ENCODE measurements at regions of chr19 and their contacts with region 1.

Region 1: GRCh38 chr19:49148784-49149651 is 6.2 kb downstream of the HRC start:
- DNase-seq: peak; percentile 39 to 83 (median 59)
- ATAC-seq: peak; percentile 75
- H3K4me3 ChIP-seq: peak overlapping the region; percentile 52
- H3K4me3 Mint-ChIP-seq: peak overlapping the region; percentile 32 to 88 (median 76)
- H3K27ac ChIP-seq: no peak overlapping the region
- H3K27ac Mint-ChIP-seq: no peak overlapping the region
- H3K4me1 ChIP-seq: peaks cover 8 to 35% of the 10 kb centered on the region in 2 donors
- H3K4me1 Mint-ChIP-seq: peaks cover 16 to 43% (median 35%) of the 10 kb centered on the region in 7 donors
- H3K27me3 ChIP-seq: peaks cover 8 to 29% of the 10 kb centered on the region in 2 donors
- H3K27me3 Mint-ChIP-seq: peaks cover 59 to 71% (median 61%) of the 10 kb centered on the region in 5 donors

Region 2: GRCh38 chr19:48152551-48152950 is 996.5 kb before region 1 on chr19:
- CTCF ChIA-PET with region 1: no interaction called
- POLR2A ChIA-PET with region 1: no interaction called
- intact Hi-C with region 1: no loop called
- DNase-seq: peak; percentile 28 to 67 (median 50)
- ATAC-seq: peak; percentile 75
- H3K4me3 ChIP-seq: no peak overlapping the region
- H3K4me3 Mint-ChIP-seq: no peak overlapping the region
- H3K27ac ChIP-seq: no peak overlapping the region
- H3K27ac Mint-ChIP-seq: peak overlapping the region in 1 of 9 donors; percentile 74
- H3K4me1 ChIP-seq: no peaks in the 10 kb centered on the region
- H3K4me1 Mint-ChIP-seq: peaks cover 0 to 13% (median 2%) of the 10 kb centered on the region in 7 donors
- H3K27me3 ChIP-seq: no peaks in the 10 kb centered on the region
- H3K27me3 Mint-ChIP-seq: no peaks in the 10 kb centered on the region

Region 3: DNA sequence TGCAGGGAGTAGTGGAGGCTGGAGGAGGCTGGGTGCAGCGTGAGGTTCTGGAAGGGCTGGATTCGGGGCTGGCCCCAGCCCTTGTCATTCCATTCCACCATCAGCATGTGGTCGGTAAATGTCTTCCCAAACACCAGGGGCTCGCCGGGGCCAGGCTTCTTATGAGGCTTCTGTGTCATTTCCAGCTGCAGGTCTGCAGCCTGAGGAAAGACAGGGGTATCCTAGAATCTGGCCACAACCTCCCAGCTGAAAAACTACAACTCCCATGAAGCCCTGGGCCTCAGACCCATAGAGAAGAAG is 342.6 kb before region 1 on chr19:
- CTCF ChIA-PET with region 1: no interaction called
- POLR2A ChIA-PET with region 1: no interaction called
- intact Hi-C with region 1: no loop called
- DNase-seq: peak in 6 of 9 donors; percentile 26 to 63 (median 47)
- ATAC-seq: peak; percentile 76
- H3K4me3 ChIP-seq: no peak overlapping the region
- H3K4me3 Mint-ChIP-seq: peak overlapping the region in 2 of 10 donors; percentile 17 to 36
- H3K27ac ChIP-seq: no peak overlapping the region
- H3K27ac Mint-ChIP-seq: peak overlapping the region in 4 of 9 donors; percentile 26 to 49 (median 37)
- H3K4me1 ChIP-seq: peaks cover 10% of the 10 kb centered on the region in 2 donors
- H3K4me1 Mint-ChIP-seq: peaks cover 11 to 29% (median 26%) of the 10 kb centered on the region in 7 donors
- H3K27me3 ChIP-seq: no peaks in the 10 kb centered on the region
- H3K27me3 Mint-ChIP-seq: no peaks in the 10 kb centered on the region

Region 4: DNA sequence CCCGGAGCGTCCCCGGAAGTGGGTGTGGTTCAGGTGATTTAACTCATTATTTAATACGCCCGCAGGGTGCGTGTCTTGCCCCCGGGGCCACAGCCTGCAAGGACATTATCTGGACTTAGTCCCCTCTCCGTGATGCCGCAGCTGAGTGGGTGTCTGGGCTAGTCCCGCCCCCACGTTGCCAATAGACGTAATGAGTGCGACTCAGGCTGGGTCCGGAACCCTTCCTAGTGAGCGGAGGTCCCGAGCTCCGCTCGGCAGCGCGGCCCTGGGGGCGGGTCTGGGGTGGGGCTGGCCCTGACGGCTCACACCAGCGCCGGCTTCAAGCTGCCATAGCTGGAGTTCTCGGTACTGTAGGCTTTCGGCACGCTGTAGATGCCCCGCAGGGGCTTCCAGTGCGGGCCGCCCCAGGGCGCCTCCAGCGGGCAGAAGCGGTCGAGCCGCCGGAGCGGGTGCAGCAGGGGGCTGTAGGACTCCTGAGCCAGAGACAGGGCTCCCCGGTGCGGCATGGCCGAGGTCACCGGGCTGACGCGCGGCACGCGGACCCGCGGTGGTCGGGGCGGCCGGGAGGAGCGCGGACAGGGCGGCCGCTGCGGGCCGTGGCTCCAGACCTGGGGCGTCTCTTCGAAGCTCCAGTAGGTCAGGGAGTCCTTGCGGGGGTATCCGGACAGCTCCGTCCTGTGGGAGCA is 131.2 kb before region 1 on chr19:
- CTCF ChIA-PET with region 1: no interaction called
- POLR2A ChIA-PET with region 1: no interaction called
- intact Hi-C with region 1: loop called in 1 of 2 experiments (anchors 5 kb)
- DNase-seq: peak; percentile 49 to 71 (median 67)
- ATAC-seq: peak; percentile 91
- H3K4me3 ChIP-seq: peak overlapping the region; percentile 76
- H3K4me3 Mint-ChIP-seq: peak overlapping the region; percentile 78 to 95 (median 90)
- H3K27ac ChIP-seq: peak overlapping the region; percentile 48
- H3K27ac Mint-ChIP-seq: peak overlapping the region in 3 of 9 donors; percentile 28 to 45 (median 42)
- H3K4me1 ChIP-seq: peaks cover 0 to 4% of the 10 kb centered on the region in 2 donors
- H3K4me1 Mint-ChIP-seq: peaks cover 7 to 22% (median 18%) of the 10 kb centered on the region in 7 donors
- H3K27me3 ChIP-seq: no peaks in the 10 kb centered on the region
- H3K27me3 Mint-ChIP-seq: peaks cover 0 to 22% (median 0%) of the 10 kb centered on the region in 5 donors

Region 5: DNA sequence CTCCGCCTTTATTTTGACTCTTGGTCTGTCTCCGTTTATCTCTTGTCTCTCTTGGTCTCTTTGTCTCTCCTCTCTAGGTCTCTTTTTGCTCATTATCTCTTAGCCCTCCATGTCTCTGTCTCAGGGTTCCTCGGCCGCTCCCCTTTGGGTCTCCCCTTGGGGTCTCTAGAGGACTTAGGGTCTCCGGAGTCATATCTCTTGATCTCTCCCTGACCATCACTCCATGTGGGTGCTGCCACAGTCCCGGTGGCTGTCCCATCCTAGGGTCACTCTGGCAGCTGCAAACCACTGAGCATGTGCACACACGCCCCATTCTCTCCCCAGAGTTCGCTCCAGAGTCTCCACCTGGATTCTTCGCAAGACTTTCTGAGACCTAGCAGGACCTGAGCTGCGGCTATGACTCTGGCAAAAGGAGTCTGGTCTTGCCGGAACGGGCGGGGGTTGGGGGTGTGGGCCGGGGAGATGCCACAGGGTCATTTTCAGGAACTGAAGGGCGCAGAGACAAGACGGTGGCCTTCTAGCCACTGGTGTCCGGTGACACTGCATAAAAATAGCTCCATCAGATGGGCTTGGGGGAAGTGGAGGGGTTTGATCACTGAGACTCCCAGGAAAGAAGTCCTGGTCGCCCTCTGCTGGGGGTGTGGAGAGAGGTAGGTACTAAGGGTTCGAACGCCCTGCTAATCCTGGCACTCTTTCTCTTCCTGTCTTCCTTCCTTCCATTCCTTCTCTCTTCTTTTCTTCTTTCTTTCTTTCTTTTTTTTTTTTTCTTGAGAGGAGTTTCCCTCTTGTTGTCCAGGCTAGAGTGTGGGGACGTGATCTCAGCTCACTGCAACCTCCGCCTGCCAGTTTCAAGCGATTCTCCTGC is 75.3 kb before region 1 on chr19:
- CTCF ChIA-PET with region 1: no interaction called
- POLR2A ChIA-PET with region 1: no interaction called
- intact Hi-C with region 1: loop called in 1 of 2 experiments (anchors 1 kb)
- DNase-seq: no peak
- ATAC-seq: no peak
- H3K4me3 ChIP-seq: no peak overlapping the region
- H3K4me3 Mint-ChIP-seq: peak overlapping the region; percentile 11 to 82 (median 72)
- H3K27ac ChIP-seq: no peak overlapping the region
- H3K27ac Mint-ChIP-seq: peak overlapping the region in 3 of 9 donors; percentile 4 to 62 (median 7)
- H3K4me1 ChIP-seq: no peaks in the 10 kb centered on the region
- H3K4me1 Mint-ChIP-seq: peaks cover 7 to 20% (median 13%) of the 10 kb centered on the region in 7 donors
- H3K27me3 ChIP-seq: peaks cover 4 to 12% of the 10 kb centered on the region in 2 donors
- H3K27me3 Mint-ChIP-seq: peaks cover 48 to 73% (median 53%) of the 10 kb centered on the region in 5 donors

Region 6: DNA sequence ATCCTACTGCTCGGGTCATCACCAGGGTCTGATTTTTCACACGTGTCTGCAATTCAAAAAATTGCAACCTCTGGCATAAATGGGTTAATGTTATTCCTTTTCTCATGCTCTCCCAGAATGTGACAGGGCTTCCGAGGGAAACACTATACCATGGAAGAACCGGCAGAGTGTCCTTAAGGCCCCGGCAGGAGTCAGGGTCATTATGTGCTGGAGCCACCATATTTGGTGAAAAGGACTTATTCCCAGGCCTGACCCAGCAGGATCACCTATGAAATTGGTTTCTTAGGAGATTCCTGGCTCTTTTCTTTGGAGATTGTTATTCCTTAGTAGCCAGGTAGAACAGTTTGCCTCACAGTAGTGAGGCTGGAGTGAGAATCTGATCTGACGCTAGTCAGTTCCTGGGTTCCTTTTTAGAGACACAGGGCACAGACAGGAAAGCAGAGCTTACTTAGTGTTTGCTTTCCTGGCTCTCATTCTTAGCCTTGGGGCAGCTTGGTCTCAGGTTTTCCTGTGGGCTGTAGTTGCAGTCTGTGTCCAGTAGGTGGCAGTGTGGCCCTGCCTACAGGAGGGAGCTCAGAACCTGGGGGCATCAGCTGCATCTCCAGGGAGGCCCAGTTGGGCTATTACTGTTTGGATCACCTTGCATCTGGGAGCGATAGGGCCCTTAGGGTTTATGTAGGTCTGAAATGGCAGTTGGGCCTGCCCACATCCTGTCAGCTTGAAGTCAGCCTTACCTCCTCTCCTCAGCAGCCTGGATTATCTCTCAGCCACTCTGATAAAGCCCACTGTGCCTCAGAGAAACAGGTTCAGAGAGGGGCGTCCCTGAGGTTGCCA is 51.3 kb before region 1 on chr19:
- CTCF ChIA-PET with region 1: interaction called, 28 read pairs
- POLR2A ChIA-PET with region 1: interaction called, 4 read pairs
- intact Hi-C with region 1: loop called (anchors 1 kb)
- DNase-seq: peak; percentile 58 to 81 (median 73)
- ATAC-seq: peak; percentile 97
- H3K4me3 ChIP-seq: no peak overlapping the region
- H3K4me3 Mint-ChIP-seq: no peak overlapping the region
- H3K27ac ChIP-seq: no peak overlapping the region
- H3K27ac Mint-ChIP-seq: peak overlapping the region in 5 of 9 donors; percentile 8 to 67 (median 49)
- H3K4me1 ChIP-seq: peaks cover 0 to 6% of the 10 kb centered on the region in 2 donors
- H3K4me1 Mint-ChIP-seq: peaks cover 0 to 17% (median 12%) of the 10 kb centered on the region in 7 donors
- H3K27me3 ChIP-seq: no peaks in the 10 kb centered on the region
- H3K27me3 Mint-ChIP-seq: no peaks in the 10 kb centered on the region

Region 7: DNA sequence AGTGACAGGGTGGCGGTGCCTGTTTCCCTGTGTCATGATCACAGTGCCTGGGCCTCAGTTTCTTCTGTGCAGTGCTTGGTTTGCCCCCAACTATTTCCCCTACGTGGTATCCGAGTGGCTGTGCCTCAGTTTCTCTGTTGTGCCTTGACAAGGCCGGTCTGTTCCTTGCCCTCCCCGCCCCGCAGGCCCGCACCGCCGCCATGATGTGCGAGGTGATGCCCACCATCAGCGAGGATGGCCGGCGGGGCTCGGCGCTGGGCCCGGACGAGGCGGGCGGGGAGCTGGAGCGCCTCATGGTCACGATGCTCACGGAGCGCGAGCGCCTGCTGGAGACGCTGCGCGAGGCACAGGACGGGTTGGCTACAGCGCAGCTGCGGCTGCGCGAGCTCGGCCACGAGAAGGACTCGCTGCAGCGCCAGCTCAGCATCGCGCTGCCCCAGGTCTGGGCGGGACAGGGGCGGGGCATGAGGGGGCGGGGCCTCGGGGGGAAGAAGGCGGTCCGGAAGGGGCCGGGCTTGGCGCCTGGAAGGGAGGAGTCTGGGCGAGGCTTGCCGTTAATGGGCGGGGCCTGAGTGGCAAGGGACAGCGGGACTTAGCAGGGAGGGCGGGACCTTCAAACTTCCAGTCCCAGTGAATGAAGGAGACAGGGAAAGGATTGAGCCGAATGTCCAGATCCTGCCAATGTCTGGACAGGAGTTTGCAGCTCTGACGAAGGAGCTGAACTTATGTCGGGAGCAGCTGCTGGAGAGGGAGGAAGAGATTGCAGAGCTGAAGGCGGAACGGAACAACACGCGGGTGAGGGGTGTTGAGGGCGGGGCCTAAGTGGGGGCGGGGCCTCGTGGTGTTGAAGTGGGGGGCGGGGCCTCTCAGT is 21.1 kb before region 1 on chr19:
- CTCF ChIA-PET with region 1: interaction called, 3 read pairs
- POLR2A ChIA-PET with region 1: no interaction called
- intact Hi-C with region 1: loop called (anchors 1 kb)
- DNase-seq: peak; percentile 89 to 97 (median 94)
- ATAC-seq: peak; percentile 99
- H3K4me3 ChIP-seq: peak overlapping the region; percentile 71
- H3K4me3 Mint-ChIP-seq: peak overlapping the region; percentile 82 to 98 (median 90)
- H3K27ac ChIP-seq: no peak overlapping the region
- H3K27ac Mint-ChIP-seq: peak overlapping the region; percentile 8 to 98 (median 88)
- H3K4me1 ChIP-seq: peaks cover 5 to 8% of the 10 kb centered on the region in 2 donors
- H3K4me1 Mint-ChIP-seq: peaks cover 10 to 18% (median 12%) of the 10 kb centered on the region in 7 donors
- H3K27me3 ChIP-seq: no peaks in the 10 kb centered on the region
- H3K27me3 Mint-ChIP-seq: peaks cover 0 to 14% (median 0%) of the 10 kb centered on the region in 5 donors

Region 8: GRCh38 chr19:49200238-49200862 is 51.3 kb after region 1 on chr19:
- CTCF ChIA-PET with region 1: no interaction called
- POLR2A ChIA-PET with region 1: no interaction called
- intact Hi-C with region 1: loop called in 1 of 2 experiments (anchors 1 kb)
- DNase-seq: no peak
- ATAC-seq: no peak
- H3K4me3 ChIP-seq: no peak overlapping the region
- H3K4me3 Mint-ChIP-seq: no peak overlapping the region
- H3K27ac ChIP-seq: no peak overlapping the region
- H3K27ac Mint-ChIP-seq: no peak overlapping the region
- H3K4me1 ChIP-seq: no peaks in the 10 kb centered on the region
- H3K4me1 Mint-ChIP-seq: peaks cover 0 to 9% (median 0%) of the 10 kb centered on the region in 7 donors
- H3K27me3 ChIP-seq: no peaks in the 10 kb centered on the region
- H3K27me3 Mint-ChIP-seq: peaks cover 0 to 3% (median 0%) of the 10 kb centered on the region in 5 donors

Region 9: DNA sequence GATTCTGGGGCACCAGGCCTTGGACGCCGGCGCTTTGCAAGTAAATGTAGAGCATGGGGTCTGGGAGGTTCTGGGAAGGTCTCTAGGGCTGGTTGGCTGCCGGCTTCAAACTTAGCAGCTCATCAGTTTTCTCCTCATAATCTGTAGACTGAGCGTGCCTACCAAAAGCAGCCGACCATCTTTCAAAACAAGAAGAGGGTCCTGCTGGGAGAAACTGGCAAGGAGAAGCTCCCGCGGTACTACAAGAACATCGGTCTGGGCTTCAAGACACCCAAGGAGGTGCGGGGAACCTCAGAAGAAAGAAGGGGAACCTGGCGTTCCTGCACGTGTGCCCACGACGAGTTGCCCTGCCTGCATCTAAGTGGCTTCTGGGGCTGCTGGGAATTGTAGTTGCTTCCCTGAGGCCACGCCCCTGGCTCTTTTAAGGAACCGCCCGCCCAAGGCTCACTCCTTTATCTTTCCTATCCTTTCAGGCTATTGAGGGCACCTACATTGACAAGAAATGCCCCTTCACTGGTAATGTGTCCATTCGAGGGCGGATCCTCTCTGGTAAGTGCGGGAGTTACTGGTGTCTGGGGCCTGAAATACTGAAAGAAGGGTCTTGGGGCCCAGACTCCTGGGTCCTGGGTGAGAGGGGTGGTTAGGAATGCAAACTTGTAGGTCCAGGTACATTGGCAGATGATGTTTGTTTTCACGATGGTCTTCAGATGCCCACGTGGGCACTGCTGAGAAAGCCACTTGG is 348.2 kb after region 1 on chr19:
- CTCF ChIA-PET with region 1: no interaction called
- POLR2A ChIA-PET with region 1: no interaction called
- intact Hi-C with region 1: no loop called
- DNase-seq: peak; percentile 55 to 85 (median 77)
- ATAC-seq: peak; percentile 20
- H3K4me3 ChIP-seq: peak overlapping the region; percentile 97
- H3K4me3 Mint-ChIP-seq: peak overlapping the region; percentile 96 to 100 (median 99)
- H3K27ac ChIP-seq: peak overlapping the region; percentile 99
- H3K27ac Mint-ChIP-seq: peak overlapping the region; percentile 91 to 100 (median 98)
- H3K4me1 ChIP-seq: peaks cover 21 to 40% of the 10 kb centered on the region in 2 donors
- H3K4me1 Mint-ChIP-seq: peaks cover 32 to 64% (median 50%) of the 10 kb centered on the region in 7 donors
- H3K27me3 ChIP-seq: no peaks in the 10 kb centered on the region
- H3K27me3 Mint-ChIP-seq: peaks cover 0 to 12% (median 0%) of the 10 kb centered on the region in 5 donors

Measured in naive thymus-derived CD4-positive, alpha-beta T cell (primary cell).